ENCODE measurements at regions of chr16 and their contacts with region 1.

Region 1: DNA sequence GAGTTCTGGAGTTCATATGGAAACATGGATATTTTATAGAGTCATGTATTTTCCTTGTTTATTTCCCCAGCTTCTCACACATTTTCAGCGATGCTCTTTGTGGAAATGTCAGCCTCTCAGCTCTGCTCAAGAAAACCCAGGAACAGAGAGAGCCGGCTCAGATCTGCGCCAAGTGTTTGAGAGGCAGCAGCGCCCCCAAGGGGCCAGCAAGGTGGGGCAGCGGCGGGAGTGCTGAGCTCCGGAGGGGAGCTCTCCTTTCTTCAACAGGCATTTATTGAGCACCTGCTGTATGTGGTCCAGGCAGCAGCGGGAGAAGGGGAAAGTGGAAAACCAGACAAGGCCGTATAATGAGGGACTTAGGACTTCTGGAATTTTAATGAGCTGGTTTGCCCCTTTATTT is 421.1 kb upstream of the C16orf82 start:
- DNase-seq: peak; percentile 80
- ATAC-seq: peak; percentile 95
- H3K4me3 Mint-ChIP-seq: no peak overlapping the region
- H3K27ac Mint-ChIP-seq: no peak overlapping the region
- H3K4me1 Mint-ChIP-seq: peaks cover 13% of the 10 kb centered on the region
- H3K27me3 Mint-ChIP-seq: no peaks in the 10 kb centered on the region
- CTCF ChIP-seq: peak; percentile 79

Region 2: DNA sequence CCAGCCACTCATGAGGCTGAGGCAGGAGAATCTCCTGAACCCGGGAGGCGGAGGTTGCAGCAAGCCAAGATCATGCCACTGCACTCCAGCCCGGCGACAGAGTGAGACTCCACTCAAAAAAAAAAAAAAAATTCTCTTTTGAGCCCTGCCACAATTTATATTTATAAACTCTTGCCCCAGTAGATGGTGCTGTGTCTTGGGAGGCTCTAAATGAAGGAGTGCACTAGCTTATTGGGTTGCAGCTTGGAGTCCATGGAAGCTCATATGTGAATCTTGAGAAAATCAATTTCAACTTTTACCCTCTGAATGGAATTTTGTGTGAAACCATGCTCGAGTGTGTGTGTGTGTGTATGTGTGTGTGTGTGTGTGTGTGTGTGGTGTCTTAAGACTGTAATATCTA is 533.7 kb before region 1 on chr16:
- CTCF ChIA-PET with region 1: interaction called, 10 read pairs
- POLR2A ChIA-PET with region 1: no interaction called
- DNase-seq: no peak
- ATAC-seq: peak; percentile 62
- H3K4me3 Mint-ChIP-seq: no peak overlapping the region
- H3K27ac Mint-ChIP-seq: no peak overlapping the region
- H3K4me1 Mint-ChIP-seq: peaks cover 10% of the 10 kb centered on the region; the same call in 1 of the 2 replicates
- H3K27me3 Mint-ChIP-seq: no peaks in the 10 kb centered on the region
- CTCF ChIP-seq: no peak

Region 3: GRCh38 chr16:26493751-26494150 is 151.9 kb before region 1 on chr16:
- CTCF ChIA-PET with region 1: interaction called, 11 read pairs
- POLR2A ChIA-PET with region 1: no interaction called
- DNase-seq: no peak
- ATAC-seq: no peak
- H3K4me3 Mint-ChIP-seq: no peak overlapping the region; the same call in 1 of the 2 replicates
- H3K27ac Mint-ChIP-seq: no peak overlapping the region
- H3K4me1 Mint-ChIP-seq: peaks cover 42% of the 10 kb centered on the region
- H3K27me3 Mint-ChIP-seq: no peaks in the 10 kb centered on the region
- CTCF ChIP-seq: no peak

Region 4: DNA sequence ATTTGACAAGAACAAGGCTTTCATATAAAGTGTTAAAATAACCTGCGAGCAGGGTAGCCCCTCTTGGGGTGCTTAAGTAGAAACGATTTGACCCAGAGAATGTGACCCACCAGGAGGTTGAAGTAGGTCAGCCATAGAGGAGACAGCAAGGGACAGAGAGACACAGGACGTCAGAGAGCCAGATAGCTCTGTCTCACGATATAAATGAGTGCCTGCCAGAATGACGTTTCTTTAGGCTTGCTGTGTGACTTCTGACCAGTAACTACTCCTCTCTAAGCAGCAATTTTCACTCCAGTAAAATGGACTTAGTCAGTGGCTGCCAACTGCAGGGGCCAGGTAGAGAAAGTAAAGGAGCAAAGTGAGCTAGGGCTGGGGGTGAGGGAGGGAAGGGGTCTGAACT is 51.9 kb before region 1 on chr16:
- CTCF ChIA-PET with region 1: interaction called, 10 read pairs
- POLR2A ChIA-PET with region 1: no interaction called
- DNase-seq: no peak
- ATAC-seq: no peak
- H3K4me3 Mint-ChIP-seq: no peak overlapping the region
- H3K27ac Mint-ChIP-seq: no peak overlapping the region
- H3K4me1 Mint-ChIP-seq: peaks cover 16% of the 10 kb centered on the region
- H3K27me3 Mint-ChIP-seq: no peaks in the 10 kb centered on the region
- CTCF ChIP-seq: no peak